Right cardiac atrium (tissue), 5 donors: ENCODE measurements at regions of chrX and their contacts with region 1.

Region 1: DNA sequence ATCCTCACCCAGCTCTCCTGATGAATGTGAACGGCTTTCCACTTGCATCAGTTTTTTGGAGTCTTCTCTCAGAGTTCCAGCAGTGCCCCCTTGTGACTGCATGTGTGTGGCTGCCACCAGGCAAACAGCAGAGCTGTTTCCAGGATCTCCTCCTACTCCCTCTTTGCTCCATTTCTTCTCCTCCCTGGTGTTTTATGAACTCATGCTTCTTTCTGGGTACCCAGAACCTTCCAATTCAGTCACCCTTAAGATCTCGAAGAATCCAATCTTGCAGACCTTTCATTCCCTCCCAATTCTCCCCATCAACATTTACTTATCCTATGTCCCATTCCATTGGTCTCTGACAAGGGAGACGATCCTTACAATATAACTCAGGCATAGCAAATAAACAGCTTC is 6.8 kb upstream of the TCEANC start:
- DNase-seq: peak; percentile 63 to 84 (median 73)
- ATAC-seq: peak; percentile 57 to 79
- H3K4me3 ChIP-seq: no peak overlapping the region
- H3K27ac ChIP-seq: no peak overlapping the region
- H3K4me1 ChIP-seq: peaks cover 3% of the 10 kb centered on the region
- H3K27me3 ChIP-seq: no peaks in the 10 kb centered on the region

Region 2: GRCh38 chrX:13506574-13506973 is 139.6 kb before region 1 on chrX:
- intact Hi-C with region 1: loop called (anchors 2 to 5 kb)
- DNase-seq: peak; percentile 44 to 65 (median 47)
- ATAC-seq: no peak
- H3K4me3 ChIP-seq: no peak overlapping the region
- H3K27ac ChIP-seq: no peak overlapping the region
- H3K4me1 ChIP-seq: no peaks in the 10 kb centered on the region
- H3K27me3 ChIP-seq: no peaks in the 10 kb centered on the region